ENCODE measurements at regions of chr1 and their contacts with region 1.

Region 1: GRCh38 chr1:161486806-161487741 is 18.2 kb upstream of the FCGR2A start:
- DNase-seq: peak; percentile 23
- ATAC-seq: peak; percentile 88
- H3K4me3 ChIP-seq: no peak overlapping the region
- H3K27ac ChIP-seq: no peak overlapping the region
- H3K4me1 ChIP-seq: no peaks in the 10 kb centered on the region
- H3K27me3 ChIP-seq: no peaks in the 10 kb centered on the region
- CTCF ChIP-seq: peak; percentile 66 to 76 (median 76)
- EP300 ChIP-seq: no peak
- POLR2A ChIP-seq: no peak
- RAD21 ChIP-seq: peak; percentile 86

Region 2: GRCh38 chr1:160575112-160575664 is 911.9 kb before region 1 on chr1:
- CTCF ChIA-PET with region 1: no interaction called
- POLR2A ChIA-PET with region 1: no interaction called
- RAD21 ChIA-PET with region 1: no interaction called
- SMC1A ChIA-PET with region 1: no interaction called
- in situ Hi-C with region 1: no loop called
- intact Hi-C with region 1: no loop called
- DNase-seq: no peak
- ATAC-seq: peak; percentile 49
- H3K4me3 ChIP-seq: no peak overlapping the region
- H3K27ac ChIP-seq: peak overlapping the region; percentile 97
- H3K4me1 ChIP-seq: peaks cover 27% of the 10 kb centered on the region
- H3K27me3 ChIP-seq: no peaks in the 10 kb centered on the region
- CTCF ChIP-seq: no peak
- EP300 ChIP-seq: no peak
- POLR2A ChIP-seq: no peak
- RAD21 ChIP-seq: no peak

Region 3: DNA sequence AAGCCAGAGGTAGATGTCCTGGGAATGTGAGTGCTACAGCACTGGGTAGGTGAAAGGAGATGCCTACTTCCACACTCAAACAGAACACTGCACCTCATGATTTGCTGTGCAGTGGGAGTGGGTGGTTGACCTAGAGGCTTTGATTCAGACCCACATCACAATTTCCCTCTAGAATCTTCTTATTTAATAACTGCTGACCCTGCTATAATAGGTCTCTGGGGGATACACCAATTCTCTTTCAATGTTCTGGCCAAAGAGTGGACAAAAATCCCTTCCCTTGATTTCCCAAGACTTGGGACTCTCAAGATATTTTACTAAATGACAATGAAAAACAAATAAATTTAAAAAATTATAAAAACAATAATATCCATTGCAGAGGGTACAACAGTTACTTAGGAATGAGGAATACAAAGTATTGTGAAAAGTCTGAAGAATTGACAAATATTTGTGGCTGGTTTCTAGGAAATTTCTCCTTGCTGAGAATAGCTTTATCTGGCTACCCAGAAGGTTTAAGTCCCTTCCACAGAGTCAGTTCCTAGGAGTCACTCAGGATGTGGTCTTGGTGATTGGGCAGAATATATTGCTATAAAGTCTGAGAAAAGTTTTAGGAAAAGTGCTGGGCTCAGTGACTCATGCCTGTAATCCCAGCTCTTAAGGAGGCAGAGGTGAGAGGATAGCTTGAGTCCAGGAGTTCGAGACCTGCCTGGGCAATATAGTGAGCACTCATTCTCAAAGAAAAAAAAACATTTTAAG is 15.7 kb after region 1 on chr1:
- CTCF ChIA-PET with region 1: interaction called, 10 read pairs
- POLR2A ChIA-PET with region 1: no interaction called
- RAD21 ChIA-PET with region 1: no interaction called
- SMC1A ChIA-PET with region 1: interaction called, 5 read pairs
- in situ Hi-C with region 1: no loop called
- intact Hi-C with region 1: no loop called
- DNase-seq: no peak
- ATAC-seq: no peak
- H3K4me3 ChIP-seq: no peak overlapping the region
- H3K27ac ChIP-seq: no peak overlapping the region
- H3K4me1 ChIP-seq: peaks cover 7% of the 10 kb centered on the region
- H3K27me3 ChIP-seq: no peaks in the 10 kb centered on the region
- CTCF ChIP-seq: no peak
- EP300 ChIP-seq: no peak
- POLR2A ChIP-seq: no peak
- RAD21 ChIP-seq: no peak

Region 4: DNA sequence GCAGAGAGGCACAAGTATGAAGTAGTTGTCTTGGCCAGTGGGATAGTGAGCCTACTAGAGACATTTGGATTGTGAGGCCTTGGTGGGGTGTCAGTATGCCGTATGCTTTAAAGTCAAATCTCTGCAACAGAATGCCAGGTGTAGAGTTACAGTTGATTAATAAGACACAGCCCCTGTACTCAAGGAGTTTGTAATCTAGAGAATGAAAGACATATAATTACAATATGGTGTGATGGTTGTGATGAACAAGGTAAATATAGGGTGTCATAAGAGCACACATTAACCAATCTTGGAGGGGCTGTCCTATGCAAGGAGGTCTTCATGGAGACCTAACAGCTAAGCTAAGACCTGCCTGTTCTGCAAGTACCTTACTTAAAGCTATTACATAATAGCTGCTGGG is 392.2 kb after region 1 on chr1:
- CTCF ChIA-PET with region 1: no interaction called
- POLR2A ChIA-PET with region 1: no interaction called
- RAD21 ChIA-PET with region 1: no interaction called
- SMC1A ChIA-PET with region 1: no interaction called
- in situ Hi-C with region 1: no loop called
- intact Hi-C with region 1: no loop called
- DNase-seq: no peak
- ATAC-seq: no peak
- H3K4me3 ChIP-seq: no peak overlapping the region
- H3K27ac ChIP-seq: no peak overlapping the region
- H3K4me1 ChIP-seq: no peaks in the 10 kb centered on the region
- H3K27me3 ChIP-seq: no peaks in the 10 kb centered on the region
- CTCF ChIP-seq: no peak
- EP300 ChIP-seq: no peak
- POLR2A ChIP-seq: no peak
- RAD21 ChIP-seq: no peak